Lower leg skin (tissue), 4 donors: ENCODE measurements at regions of chr6 and their contacts with region 1.

Region 1: DNA sequence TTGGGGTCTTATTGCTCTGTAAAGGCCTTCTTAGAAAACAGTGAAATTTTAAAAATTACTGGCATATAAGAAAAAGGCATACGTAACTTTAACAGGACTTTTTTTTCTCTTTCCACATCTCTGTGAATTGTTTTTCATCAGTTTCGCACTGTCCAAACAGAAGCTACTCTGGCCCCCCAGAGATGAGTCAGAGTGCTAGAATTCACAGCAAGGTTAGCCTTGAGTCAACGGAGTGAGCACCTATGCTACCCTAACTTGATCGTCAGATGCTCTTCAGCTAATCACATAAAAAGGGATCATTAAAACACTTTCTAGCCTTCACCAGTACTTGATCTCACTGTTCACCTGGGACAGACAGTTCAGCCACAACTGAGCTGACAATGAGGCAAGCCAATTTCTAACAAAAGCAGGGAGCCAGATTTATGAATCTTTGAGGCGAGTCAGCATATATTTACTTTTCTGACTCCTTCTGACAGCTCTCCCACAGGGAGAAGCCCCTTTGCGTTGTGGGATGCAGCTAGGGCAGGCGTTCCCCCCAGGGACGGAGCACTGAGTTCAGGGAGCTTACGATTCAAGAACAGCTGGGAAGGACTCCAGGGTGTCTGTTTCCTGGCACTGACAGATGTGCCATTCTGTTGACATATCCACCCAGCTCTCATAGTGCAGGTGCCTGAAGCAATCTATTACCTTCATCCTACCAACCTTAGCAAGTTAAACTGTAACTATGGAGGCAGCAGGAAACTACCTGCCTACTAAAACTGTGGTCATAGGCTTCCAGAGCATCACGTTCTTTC is 46.4 kb upstream of the SPDEF start:
- DNase-seq: peak in 1 of 2 donors; percentile 48
- H3K4me3 ChIP-seq: no peak overlapping the region
- CTCF ChIP-seq: no peak
- POLR2A ChIP-seq: no peak

Region 2: GRCh38 chr6:34459899-34460593 is 142.5 kb before region 1 on chr6:
- intact Hi-C with region 1: loop called (anchors 5 kb)
- DNase-seq: peak in 1 of 2 donors; percentile 21
- H3K4me3 ChIP-seq: no peak overlapping the region
- CTCF ChIP-seq: no peak
- POLR2A ChIP-seq: no peak

Region 3: DNA sequence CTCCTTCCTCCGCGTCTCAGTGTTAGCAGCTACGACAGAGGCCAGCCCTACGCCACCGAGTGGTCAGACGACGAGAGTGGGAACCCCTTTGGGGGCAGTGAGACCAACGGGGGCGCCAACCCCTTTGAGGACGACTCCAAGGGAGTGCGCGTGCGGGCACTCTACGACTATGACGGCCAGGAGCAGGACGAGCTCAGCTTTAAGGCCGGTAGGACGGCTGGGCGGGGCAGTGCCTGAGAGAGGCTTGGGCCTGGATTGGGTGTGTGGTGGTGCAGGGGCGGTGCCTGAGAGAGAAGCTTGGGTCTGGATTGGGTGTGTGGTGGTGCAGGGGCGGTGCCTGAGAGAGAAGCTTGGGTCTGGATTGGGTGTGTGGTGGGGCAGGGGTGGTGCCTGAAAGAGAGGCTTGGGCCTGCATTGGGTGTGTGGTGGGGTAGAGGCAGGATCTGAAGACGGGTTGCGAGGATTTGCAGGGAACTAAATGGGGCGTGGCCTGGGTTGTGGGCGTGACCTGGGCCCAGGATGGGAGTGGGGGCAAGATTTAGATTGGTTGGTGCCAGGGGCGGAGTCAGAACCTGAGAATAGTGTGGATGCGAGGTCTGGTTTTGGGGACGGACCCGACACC is 70.8 kb before region 1 on chr6:
- intact Hi-C with region 1: loop called (anchors 10 kb)
- DNase-seq: peak in 1 of 2 donors; percentile 46
- H3K4me3 ChIP-seq: no peak overlapping the region
- CTCF ChIP-seq: no peak
- POLR2A ChIP-seq: no peak